MCF 10A (cell line): ENCODE measurements at regions of chr4 and their contacts with region 1.

Region 1: GRCh38 chr4:139177868-139178611 is 1.0 kb upstream of the ELF2 start:
- DNase-seq: peak; percentile 94
- H3K4me3 Mint-ChIP-seq: peak overlapping the region; percentile 96
- H3K27ac Mint-ChIP-seq: peak overlapping the region; percentile 81
- H3K4me1 Mint-ChIP-seq: peaks cover 8% of the 10 kb centered on the region
- H3K27me3 Mint-ChIP-seq: no peaks in the 10 kb centered on the region
- CTCF ChIP-seq: no peak

Region 2: GRCh38 chr4:139083956-139084803 is 93.9 kb before region 1 on chr4:
- CTCF ChIA-PET with region 1: interaction called, 3 read pairs
- POLR2A ChIA-PET with region 1: interaction called, 163 read pairs
- intact Hi-C with region 1: no loop called
- DNase-seq: peak; percentile 91
- H3K4me3 Mint-ChIP-seq: peak overlapping the region; percentile 97
- H3K27ac Mint-ChIP-seq: peak overlapping the region; percentile 95
- H3K4me1 Mint-ChIP-seq: peaks cover 15% of the 10 kb centered on the region
- H3K27me3 Mint-ChIP-seq: no peaks in the 10 kb centered on the region
- CTCF ChIP-seq: no peak

Region 3: DNA sequence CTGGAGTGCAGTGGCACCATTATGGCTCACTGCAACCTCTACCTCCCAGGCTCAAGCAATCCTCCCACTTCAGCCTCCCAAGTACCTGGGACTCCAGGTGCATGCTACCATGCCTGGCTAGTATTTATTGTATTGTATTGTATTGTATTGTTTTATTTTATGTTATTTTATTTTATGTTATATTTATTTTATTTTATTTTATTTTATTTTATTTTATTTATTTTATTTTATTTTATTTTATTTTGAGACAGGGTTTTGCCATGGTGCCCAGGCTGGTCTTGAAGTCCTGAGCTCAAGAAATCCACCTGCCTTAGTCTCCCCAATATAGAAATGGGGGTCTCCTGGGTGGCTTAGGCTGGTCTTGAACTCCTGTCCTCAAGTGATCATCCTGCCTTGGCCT is 43.6 kb before region 1 on chr4:
- CTCF ChIA-PET with region 1: no interaction called
- POLR2A ChIA-PET with region 1: no interaction called
- intact Hi-C with region 1: no loop called
- DNase-seq: no peak
- H3K4me3 Mint-ChIP-seq: no peak overlapping the region
- H3K27ac Mint-ChIP-seq: no peak overlapping the region
- H3K4me1 Mint-ChIP-seq: no peaks in the 10 kb centered on the region
- H3K27me3 Mint-ChIP-seq: no peaks in the 10 kb centered on the region
- CTCF ChIP-seq: no peak

Region 4: DNA sequence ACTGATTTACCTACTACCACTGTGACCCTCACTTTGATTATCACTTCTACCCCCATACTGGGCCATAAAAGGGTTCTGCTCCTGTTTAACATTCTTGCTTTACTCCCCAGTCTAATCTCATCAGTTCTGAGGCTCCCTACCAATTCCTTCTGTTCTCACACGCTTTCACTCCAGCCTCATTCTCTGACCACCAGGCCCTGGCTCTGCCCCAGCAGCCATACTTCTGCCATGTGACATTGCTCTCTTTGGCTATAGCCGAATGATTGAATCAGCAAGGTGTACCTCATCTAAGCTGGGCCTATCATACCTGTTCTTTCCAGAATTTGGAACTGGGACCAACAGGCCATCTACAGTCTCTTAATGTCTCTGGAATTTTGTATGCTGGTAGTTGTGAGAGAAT is 13.3 kb after region 1 on chr4:
- CTCF ChIA-PET with region 1: interaction called, 5 read pairs
- POLR2A ChIA-PET with region 1: interaction called, 10 read pairs
- intact Hi-C with region 1: no loop called
- DNase-seq: no peak
- H3K4me3 Mint-ChIP-seq: no peak overlapping the region
- H3K27ac Mint-ChIP-seq: no peak overlapping the region
- H3K4me1 Mint-ChIP-seq: no peaks in the 10 kb centered on the region
- H3K27me3 Mint-ChIP-seq: no peaks in the 10 kb centered on the region
- CTCF ChIP-seq: no peak

Region 5: GRCh38 chr4:139243448-139244365 is 65.7 kb after region 1 on chr4:
- CTCF ChIA-PET with region 1: interaction called, 4 read pairs
- POLR2A ChIA-PET with region 1: interaction called, 50 read pairs
- intact Hi-C with region 1: no loop called
- DNase-seq: peak; percentile 98
- H3K4me3 Mint-ChIP-seq: no peak overlapping the region
- H3K27ac Mint-ChIP-seq: peak overlapping the region; percentile 93
- H3K4me1 Mint-ChIP-seq: peaks cover 27% of the 10 kb centered on the region
- H3K27me3 Mint-ChIP-seq: no peaks in the 10 kb centered on the region
- CTCF ChIP-seq: no peak

Region 6: GRCh38 chr4:139301113-139301820 is 123.2 kb after region 1 on chr4 and contains the start of gene NAA15:
- CTCF ChIA-PET with region 1: interaction called, 16 read pairs
- POLR2A ChIA-PET with region 1: interaction called, 254 read pairs
- intact Hi-C with region 1: no loop called
- DNase-seq: peak; percentile 98
- H3K4me3 Mint-ChIP-seq: peak within 1 kb of the TSS; percentile 87
- H3K27ac Mint-ChIP-seq: peak within 1 kb of the TSS; percentile 98
- H3K4me1 Mint-ChIP-seq: peaks cover 7% of the 10 kb centered on the region
- H3K27me3 Mint-ChIP-seq: no peaks in the 10 kb centered on the region
- CTCF ChIP-seq: no peak
- total RNA-seq, gene NAA15: 54.9 and 80.6 TPM in 2 replicates

Region 7: DNA sequence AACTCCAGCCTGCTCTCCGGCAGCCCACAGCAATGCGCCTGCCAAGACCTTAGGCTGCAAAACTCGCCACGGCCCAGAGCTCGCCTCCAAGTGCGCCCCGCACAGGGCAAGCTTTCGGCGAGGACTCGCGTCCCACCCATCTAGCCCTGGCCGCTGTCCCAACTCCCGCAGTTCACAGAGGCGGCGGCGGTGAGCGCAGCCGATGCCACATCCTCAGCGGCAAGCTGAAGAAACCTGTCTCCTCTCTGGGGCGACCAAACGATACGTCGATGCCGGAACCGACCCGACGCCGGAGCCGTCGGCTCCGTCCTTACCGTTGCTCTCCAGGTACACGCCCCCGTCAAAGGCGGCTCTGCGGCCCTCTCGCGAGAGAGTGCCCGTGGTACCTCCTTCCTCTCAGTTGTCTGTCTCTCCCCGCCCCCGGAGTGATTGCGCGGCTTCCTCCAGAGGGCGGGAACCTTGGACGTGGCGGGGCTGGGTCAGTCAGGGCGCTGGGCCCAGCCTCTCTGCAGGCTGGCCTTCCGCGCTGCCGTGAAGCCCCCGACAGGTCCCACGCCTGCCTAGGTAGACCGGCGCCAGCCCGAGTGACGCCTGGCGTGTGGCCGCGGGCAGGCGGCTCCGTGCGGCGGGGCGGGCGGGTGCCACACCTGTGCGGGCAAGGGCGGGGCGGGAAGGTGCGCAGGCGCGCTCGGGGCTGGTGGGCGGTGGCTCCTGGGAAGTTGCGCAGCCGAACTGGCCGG is 275.5 kb after region 1 on chr4:
- CTCF ChIA-PET with region 1: no interaction called
- POLR2A ChIA-PET with region 1: interaction called, 17 read pairs
- intact Hi-C with region 1: no loop called
- DNase-seq: peak; percentile 98
- H3K4me3 Mint-ChIP-seq: peak overlapping the region; percentile 100
- H3K27ac Mint-ChIP-seq: peak overlapping the region; percentile 97
- H3K4me1 Mint-ChIP-seq: peaks cover 45% of the 10 kb centered on the region
- H3K27me3 Mint-ChIP-seq: no peaks in the 10 kb centered on the region
- CTCF ChIP-seq: no peak

Region 8: DNA sequence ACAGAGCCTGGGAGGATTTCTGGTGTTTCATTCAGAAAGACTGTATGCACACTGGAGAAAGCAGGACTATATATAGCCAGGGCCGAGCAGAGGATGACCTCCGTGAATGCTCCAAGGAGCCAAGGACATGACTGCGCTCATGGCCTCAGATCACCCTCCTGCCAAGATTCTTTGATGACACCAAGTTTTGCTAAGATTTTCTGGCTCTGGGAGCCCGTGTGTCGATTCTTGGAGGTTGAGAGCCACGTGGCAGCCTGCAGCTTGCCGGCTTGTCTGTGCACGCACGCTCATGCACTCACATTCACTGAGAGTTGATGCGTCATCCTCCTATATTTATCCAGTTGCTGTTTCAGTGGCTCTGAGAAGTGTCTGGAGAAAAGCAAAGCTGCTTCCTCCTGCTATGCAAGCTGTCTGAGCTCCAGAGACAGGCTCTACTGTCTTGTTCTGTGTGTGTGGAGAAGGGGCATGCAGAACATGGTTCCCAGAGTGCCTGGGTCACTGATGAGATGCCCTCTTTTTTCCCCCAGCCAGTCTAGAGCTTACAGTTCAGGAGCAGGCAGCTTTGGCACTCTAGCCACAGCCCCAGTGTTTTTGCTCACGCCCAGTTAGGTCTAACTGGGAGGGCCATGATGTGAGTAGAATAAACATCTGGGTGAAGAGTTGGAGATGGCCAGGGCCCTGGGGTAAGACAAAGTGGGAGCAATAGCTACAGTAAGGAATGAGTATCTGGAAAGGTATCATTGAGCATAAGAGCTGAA is 1130.5 kb after region 1 on chr4:
- CTCF ChIA-PET with region 1: no interaction called
- POLR2A ChIA-PET with region 1: no interaction called
- intact Hi-C with region 1: no loop called
- DNase-seq: peak; percentile 91
- H3K4me3 Mint-ChIP-seq: peak overlapping the region; percentile 59
- H3K27ac Mint-ChIP-seq: peak overlapping the region; percentile 54
- H3K4me1 Mint-ChIP-seq: peaks cover 49% of the 10 kb centered on the region
- H3K27me3 Mint-ChIP-seq: no peaks in the 10 kb centered on the region
- CTCF ChIP-seq: no peak